Psoas muscle (tissue), 8 donors: ENCODE measurements at regions of chr3 and their contacts with region 1.

Region 1: DNA sequence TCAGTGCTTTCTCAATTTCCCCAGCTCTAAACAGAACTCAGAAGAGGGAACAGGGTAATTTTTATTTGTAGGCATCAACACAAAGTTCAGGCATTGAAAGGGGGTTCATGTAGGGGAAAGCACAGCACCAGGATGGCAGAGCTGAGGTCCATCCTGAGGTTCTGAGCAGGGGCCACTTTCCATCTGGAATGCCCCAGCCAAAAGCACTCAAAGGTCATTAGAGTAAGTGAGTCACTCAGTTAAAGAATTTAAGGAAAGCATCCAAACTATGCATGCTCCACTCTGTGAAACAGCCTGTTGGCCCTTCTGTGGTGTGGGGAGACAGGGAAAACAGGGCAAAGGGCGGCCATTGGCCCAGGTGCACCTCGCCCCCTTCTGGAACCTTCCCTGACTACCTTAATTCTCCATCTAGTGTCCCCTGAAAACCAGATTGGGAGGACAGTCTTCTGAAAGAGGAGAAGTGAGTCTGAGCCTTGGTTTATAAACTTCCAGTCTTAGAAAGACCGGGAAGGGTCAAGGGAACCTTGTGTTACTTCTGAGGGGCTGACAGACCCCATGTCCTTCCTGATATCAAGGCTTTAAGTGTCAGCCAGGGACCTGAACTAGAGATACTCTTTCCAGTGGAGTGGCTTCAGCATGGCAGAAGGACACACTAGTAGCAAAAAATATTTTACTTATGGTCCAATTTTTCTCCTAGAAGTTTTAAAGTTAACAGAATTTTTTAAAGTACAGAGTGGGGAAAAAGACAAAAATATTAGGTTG is 133.3 kb downstream of the MYLK start:
- DNase-seq: no peak
- ATAC-seq: peak in 2 of 4 donors; percentile 42 to 69
- H3K4me3 ChIP-seq: no peak overlapping the region
- H3K27ac ChIP-seq: no peak overlapping the region
- H3K4me1 ChIP-seq: no peaks in the 10 kb centered on the region
- H3K27me3 ChIP-seq: no peaks in the 10 kb centered on the region
- CTCF ChIP-seq: no peak

Region 2: DNA sequence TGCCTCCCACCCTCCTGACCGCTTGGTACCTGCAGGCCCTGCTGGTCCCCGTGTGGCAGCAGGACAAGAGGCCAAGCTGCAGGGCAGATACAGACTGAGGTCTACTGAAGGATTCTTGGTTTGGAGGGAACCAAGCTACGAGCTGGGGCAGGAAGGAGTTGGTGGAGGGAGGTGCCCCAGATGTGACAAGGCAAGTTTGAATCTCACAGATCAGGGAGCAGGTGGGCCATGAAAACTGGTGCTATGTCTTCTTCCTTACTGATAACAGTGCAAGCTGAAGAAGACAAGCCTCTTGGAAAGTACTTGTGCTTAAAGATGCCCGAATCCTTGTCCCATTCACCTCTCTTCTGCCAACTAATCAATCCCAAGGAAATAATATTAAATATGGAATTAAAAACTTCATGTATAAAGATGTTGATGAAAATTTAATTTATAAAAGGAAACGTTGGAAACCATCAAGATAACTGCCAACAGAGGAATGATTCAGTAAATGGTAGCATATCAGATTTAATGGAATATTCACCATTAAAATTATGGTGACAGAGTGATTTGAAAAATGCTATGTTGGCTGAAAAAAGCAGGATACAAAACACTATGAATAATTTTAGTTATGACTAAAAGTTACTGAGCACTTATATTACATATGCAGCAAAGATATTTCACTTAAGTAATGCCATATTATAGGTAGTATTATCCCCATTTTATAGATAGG is 25.4 kb after region 1 on chr3:
- intact Hi-C with region 1: loop called in 1 of 2 experiments (anchors 1 kb)
- DNase-seq: no peak
- ATAC-seq: no peak
- H3K4me3 ChIP-seq: no peak overlapping the region
- H3K27ac ChIP-seq: no peak overlapping the region
- H3K4me1 ChIP-seq: no peaks in the 10 kb centered on the region
- H3K27me3 ChIP-seq: no peaks in the 10 kb centered on the region
- CTCF ChIP-seq: no peak

Region 3: GRCh38 chr3:123791417-123791816 is 40.6 kb after region 1 on chr3:
- intact Hi-C with region 1: no loop called
- DNase-seq: no peak
- ATAC-seq: peak in 1 of 4 donors; percentile 54
- H3K4me3 ChIP-seq: no peak overlapping the region
- H3K27ac ChIP-seq: no peak overlapping the region
- H3K4me1 ChIP-seq: no peaks in the 10 kb centered on the region
- H3K27me3 ChIP-seq: peaks cover 0 to 2% (median 0%) of the 10 kb centered on the region in 3 donors
- CTCF ChIP-seq: no peak